MCF 10A (cell line): ENCODE measurements at regions of chr18 and their contacts with region 1.

Region 1: DNA sequence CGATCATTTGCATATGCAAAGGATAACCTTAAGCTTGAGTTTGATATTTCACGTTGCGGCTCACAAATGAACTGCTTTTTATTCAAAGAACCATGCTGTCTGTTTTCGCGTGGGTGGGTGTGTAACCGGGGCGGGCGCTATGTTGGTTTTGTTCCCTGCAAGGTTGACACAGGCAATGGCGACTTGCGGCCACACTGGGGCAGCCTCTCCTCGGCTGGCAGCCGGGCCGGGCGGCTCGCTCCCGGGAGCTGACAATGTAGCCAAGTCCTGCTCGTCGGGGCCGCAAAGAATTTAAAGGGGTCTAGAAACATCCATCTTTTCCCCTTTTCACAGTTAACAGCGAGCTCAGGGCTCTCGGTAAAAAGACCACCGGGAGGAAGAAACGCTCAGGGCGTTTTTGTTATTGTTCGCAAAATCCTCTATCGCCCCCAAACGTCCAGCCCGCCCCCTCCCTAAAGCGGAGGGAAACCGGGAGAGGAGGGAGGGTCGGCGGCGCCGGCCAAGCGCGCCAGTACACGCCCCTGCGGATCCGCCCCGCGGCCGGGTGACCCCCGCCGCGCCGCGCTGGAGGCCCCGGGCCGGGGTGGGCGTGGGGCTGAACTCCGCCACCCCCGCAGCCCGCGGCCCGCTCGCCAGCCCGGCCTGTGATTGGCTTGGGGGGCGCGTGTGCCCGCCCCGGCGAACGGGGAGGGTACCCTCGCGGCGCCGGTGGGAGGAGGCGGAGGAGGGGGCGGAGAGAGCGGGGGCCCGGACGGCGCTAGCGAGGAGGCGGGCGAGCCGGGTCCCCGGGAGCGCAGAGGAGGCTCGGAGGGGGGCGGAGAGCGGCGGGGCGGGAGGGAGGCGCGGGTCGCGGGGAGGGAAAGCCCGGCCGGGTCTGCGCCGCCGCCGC is at the start of gene NEDD4L:
- DNase-seq: peak; percentile 83
- H3K4me3 Mint-ChIP-seq: peak within 1 kb of the TSS; percentile 88
- H3K27ac Mint-ChIP-seq: peak within 1 kb of the TSS; percentile 80
- H3K4me1 Mint-ChIP-seq: peaks cover 19% of the 10 kb centered on the region
- H3K27me3 Mint-ChIP-seq: no peaks in the 10 kb centered on the region
- CTCF ChIP-seq: peak; percentile 83
- total RNA-seq, gene NEDD4L: 75.1 and 108 TPM in 2 replicates

Region 2: DNA sequence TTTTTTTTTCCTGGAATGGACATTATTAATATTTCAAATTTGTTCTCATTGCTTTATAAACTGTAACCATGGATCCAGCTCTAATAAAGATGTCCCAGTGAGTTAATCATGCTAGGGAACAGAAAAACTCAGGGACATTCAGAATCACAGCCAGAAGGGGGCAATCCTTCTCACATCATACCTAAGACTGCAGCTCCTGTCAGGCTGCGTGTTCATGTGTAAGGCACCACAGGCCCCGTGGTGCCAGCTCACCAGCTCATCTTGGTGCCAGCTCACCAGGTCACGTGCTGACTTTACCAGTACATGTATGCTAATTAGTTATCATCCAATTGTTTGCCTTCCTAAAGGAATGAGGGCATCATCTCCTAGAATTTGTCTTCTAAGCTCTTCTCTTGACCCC is 84.5 kb before region 1 on chr18:
- CTCF ChIA-PET with region 1: interaction called, 10 read pairs
- POLR2A ChIA-PET with region 1: interaction called, 4 read pairs
- intact Hi-C with region 1: loop called (anchors 1 kb)
- DNase-seq: peak; percentile 84
- H3K4me3 Mint-ChIP-seq: no peak overlapping the region
- H3K27ac Mint-ChIP-seq: no peak overlapping the region
- H3K4me1 Mint-ChIP-seq: peaks cover 6% of the 10 kb centered on the region
- H3K27me3 Mint-ChIP-seq: no peaks in the 10 kb centered on the region
- CTCF ChIP-seq: peak; percentile 53

Region 3: GRCh38 chr18:58117786-58118403 is 74.2 kb after region 1 on chr18:
- CTCF ChIA-PET with region 1: interaction called, 33 read pairs
- POLR2A ChIA-PET with region 1: interaction called, 65 read pairs
- intact Hi-C with region 1: loop called (anchors 1 kb)
- DNase-seq: peak; percentile 82
- H3K4me3 Mint-ChIP-seq: peak overlapping the region; percentile 1
- H3K27ac Mint-ChIP-seq: peak overlapping the region; percentile 86
- H3K4me1 Mint-ChIP-seq: peaks cover 20% of the 10 kb centered on the region
- H3K27me3 Mint-ChIP-seq: no peaks in the 10 kb centered on the region
- CTCF ChIP-seq: no peak

Region 4: DNA sequence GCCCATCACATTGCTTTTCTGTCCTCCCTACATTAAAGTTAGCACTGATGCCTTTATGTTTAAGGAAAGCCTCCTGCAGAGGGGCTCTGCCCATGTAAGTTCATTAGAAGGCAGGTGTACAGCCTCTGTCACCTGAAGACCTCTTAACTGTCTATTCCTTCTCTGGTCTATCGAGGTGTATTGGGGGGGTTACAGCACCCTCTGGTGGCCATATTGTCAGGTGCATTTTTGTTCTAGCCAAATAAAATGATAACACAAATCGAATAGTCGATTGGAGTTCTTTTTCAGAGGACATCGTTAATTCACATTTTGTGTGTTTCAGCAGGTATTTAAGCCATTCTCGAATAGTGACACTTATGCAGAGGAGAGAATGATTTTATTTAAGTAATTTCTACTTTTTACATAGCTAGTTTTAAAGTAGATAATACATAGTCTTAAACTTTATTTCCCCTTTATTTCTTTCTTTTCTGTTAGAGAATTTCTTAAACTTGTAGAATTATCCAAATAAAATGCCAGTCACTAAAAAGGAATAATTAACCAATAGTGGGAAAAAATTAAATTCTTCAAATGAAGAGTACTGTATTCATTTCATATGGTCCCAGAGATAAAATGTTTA is 137.1 kb after region 1 on chr18:
- CTCF ChIA-PET with region 1: interaction called, 11 read pairs
- POLR2A ChIA-PET with region 1: interaction called, 9 read pairs
- intact Hi-C with region 1: loop called (anchors 2 kb)
- DNase-seq: peak; percentile 69
- H3K4me3 Mint-ChIP-seq: no peak overlapping the region
- H3K27ac Mint-ChIP-seq: no peak overlapping the region
- H3K4me1 Mint-ChIP-seq: peaks cover 15% of the 10 kb centered on the region
- H3K27me3 Mint-ChIP-seq: no peaks in the 10 kb centered on the region
- CTCF ChIP-seq: peak; percentile 79

Region 5: DNA sequence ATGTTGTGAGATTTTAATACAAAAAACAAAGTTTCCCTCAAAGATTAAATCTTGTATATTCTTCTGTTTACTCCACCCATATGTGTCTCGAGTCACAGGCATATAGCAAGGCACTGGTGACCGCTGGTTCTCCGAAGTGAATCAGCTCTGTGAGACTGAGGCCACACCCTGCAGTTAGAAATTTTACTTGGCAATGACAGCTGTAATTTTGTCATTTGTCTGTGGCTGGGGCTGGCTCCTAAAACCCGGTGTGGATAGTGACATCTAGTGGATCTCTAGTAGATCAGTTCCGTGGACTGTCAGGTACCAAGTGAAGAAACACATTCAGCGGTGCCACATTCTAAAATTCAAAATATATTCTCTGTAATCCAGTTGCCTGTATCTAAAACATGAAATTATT is 278.3 kb after region 1 on chr18:
- CTCF ChIA-PET with region 1: interaction called, 4 read pairs
- POLR2A ChIA-PET with region 1: interaction called, 4 read pairs
- intact Hi-C with region 1: loop called (anchors 1 kb)
- DNase-seq: peak; percentile 91
- H3K4me3 Mint-ChIP-seq: peak overlapping the region; percentile 50
- H3K27ac Mint-ChIP-seq: peak overlapping the region; percentile 85
- H3K4me1 Mint-ChIP-seq: peaks cover 14% of the 10 kb centered on the region
- H3K27me3 Mint-ChIP-seq: no peaks in the 10 kb centered on the region
- CTCF ChIP-seq: peak; percentile 48